Stomach (tissue), 19 donors: ENCODE measurements at regions of chr12 and their contacts with region 1.

Region 1: DNA sequence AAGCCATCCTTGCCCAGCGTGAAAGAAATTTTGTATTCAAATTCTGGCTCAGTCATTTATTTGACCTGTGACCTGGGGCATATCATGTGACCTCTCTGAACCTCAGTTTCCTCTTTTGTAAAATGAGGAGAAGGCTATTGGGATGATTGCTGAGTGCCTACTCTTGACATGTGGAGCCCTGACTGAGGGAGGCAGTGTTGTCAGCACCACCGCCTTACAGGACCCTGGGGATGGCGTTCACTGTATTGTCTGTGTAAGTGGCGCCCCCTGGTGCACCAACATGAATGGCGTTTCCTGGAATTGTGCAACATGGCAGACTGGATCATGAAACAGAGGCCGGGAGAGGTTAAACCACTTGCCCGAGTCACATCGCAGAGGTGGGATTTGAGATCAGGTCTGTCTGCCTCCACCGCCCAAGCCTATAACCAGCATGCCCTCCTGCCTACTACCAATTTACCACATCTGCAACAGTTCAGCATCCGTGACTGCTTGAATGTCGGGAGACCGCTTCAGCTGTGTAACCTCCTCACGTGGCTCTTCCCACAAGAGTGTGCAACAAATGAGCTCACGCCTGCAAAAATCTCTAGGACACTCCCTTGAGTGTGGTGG is 20.1 kb upstream of the CCDC63 start:
- DNase-seq: peak; percentile 83 to 89
- H3K4me3 ChIP-seq: no peak overlapping the region
- H3K27ac ChIP-seq: no peak overlapping the region
- H3K4me1 ChIP-seq: peaks cover 0 to 6% (median 0%) of the 10 kb centered on the region in 4 donors
- H3K27me3 ChIP-seq: peaks cover 0 to 12% (median 0%) of the 10 kb centered on the region in 3 donors
- CTCF ChIP-seq: peak in 5 of 7 experiments; percentile 54 to 82 (median 77)
- EP300 ChIP-seq: no peak
- POLR2A ChIP-seq: no peak

Region 2: GRCh38 chr12:110704748-110705147 is 121.9 kb before region 1 on chr12:
- intact Hi-C with region 1: loop called (anchors 10 kb)
- DNase-seq: peak; percentile 41 to 65
- H3K4me3 ChIP-seq: no peak overlapping the region
- H3K27ac ChIP-seq: no peak overlapping the region
- H3K4me1 ChIP-seq: peaks cover 0 to 2% (median 0%) of the 10 kb centered on the region in 4 donors
- H3K27me3 ChIP-seq: no peaks in the 10 kb centered on the region
- CTCF ChIP-seq: peak in 3 of 7 experiments; percentile 18 to 35 (median 23)
- EP300 ChIP-seq: no peak
- POLR2A ChIP-seq: no peak

Region 3: GRCh38 chr12:111006621-111007020 is 179.9 kb after region 1 on chr12:
- intact Hi-C with region 1: no loop called
- DNase-seq: no peak
- H3K4me3 ChIP-seq: no peak overlapping the region
- H3K27ac ChIP-seq: no peak overlapping the region
- H3K4me1 ChIP-seq: no peaks in the 10 kb centered on the region
- H3K27me3 ChIP-seq: peaks cover 0 to 57% (median 5%) of the 10 kb centered on the region in 3 donors
- CTCF ChIP-seq: no peak
- EP300 ChIP-seq: no peak
- POLR2A ChIP-seq: no peak